Mammary epithelial cell (primary cell): ENCODE measurements at regions of chrX and their contacts with region 1.

Region 1: DNA sequence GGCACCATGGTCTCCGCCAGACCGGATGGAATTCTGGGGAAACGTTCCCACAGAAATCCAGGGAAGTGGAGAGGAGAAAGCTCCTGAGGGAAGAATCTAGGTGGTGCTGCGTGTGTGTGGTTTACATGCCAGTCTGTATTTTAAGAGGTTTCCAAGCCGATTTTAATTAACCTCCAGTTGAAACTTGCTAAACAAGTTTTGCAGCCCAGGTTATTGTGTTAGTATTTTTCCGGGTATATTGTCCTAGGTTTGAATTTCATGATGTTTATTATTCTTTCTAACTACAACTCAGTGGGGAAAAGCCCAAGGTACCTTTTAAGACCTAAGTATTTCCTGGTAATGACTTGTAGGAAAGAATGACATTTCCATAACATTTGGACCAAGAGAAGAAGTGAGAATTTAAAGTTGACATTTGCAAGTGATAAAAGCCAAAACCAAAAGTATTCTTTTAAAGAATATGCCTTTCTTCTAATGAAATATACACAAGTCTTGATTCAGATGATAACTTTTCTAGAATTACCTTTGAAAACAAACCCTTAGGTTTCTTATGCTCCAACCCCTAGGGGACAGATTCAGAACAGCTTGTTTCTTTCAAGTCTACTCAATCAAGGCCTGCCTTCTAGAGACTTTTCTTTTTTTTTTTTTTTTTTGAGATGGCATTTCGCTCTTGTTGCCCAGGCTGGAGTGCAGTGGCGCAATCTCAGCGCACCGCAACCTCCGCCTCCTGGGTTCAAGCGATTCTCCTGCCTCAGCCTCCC is 14.6 kb downstream of the SAT1 start:
- DNase-seq: peak; percentile 81
- H3K4me3 ChIP-seq: no peak overlapping the region
- H3K27ac ChIP-seq: peak overlapping the region; percentile 42
- H3K4me1 ChIP-seq: peaks cover 26% of the 10 kb centered on the region
- H3K27me3 ChIP-seq: no peaks in the 10 kb centered on the region
- CTCF ChIP-seq: peak in 1 of 2 donors; percentile 21

Region 2: DNA sequence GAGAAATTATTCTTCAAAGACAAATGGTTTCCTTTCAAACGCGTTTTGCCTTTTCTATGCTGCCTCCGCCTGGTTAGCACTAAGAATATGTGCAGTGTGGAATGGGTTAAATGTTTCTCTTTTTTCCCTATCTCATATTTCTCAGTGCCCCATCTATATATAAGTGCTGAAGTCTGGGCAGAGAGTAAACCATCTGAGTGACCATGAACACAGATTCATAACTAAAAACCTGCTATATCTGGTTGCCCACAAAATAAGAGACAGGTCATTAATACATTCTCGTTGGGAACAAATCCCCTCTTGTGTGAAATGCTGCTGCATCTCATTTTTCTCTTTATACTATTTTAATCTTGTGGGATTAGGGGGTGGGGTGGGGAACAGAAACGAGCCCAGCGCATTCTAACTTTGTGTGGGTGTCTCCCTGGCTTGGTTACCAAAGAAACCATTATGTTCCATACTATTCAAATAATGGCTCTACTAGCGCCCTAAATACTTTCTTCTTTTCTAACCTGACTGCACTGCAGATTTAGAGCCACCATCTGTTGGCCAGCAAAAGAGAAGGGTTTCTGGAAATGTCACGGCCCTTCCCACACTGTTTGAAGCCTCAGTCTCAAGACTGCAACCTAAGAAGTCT is 505.1 kb before region 1 on chrX:
- CTCF ChIA-PET with region 1: no interaction called
- dilution Hi-C with region 1: no loop called
- in situ Hi-C with region 1: no loop called
- intact Hi-C with region 1: no loop called
- DNase-seq: no peak
- H3K4me3 ChIP-seq: no peak overlapping the region
- H3K27ac ChIP-seq: no peak overlapping the region
- H3K4me1 ChIP-seq: no peaks in the 10 kb centered on the region
- H3K27me3 ChIP-seq: peaks cover 2% of the 10 kb centered on the region
- CTCF ChIP-seq: no peak

Region 3: DNA sequence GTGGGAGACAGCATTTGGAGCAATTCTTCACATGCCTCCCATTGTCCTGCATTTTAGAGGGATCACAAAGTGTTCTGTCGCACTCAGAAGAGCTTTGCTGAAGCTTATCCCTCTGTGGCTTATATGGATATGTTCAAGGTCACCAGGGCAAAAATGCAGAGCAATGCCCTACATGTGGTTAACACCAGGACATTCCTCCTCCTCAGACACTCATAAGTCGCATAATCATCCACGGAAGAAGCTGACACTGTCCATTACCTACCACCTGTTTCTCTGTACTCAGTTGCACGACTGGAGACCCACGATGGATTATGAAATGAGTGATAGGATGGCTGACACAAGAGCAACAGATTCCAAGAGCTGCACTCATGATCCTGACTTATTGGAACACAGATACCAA is 199.0 kb before region 1 on chrX:
- CTCF ChIA-PET with region 1: no interaction called
- dilution Hi-C with region 1: no loop called
- in situ Hi-C with region 1: no loop called
- intact Hi-C with region 1: no loop called
- DNase-seq: no peak
- H3K4me3 ChIP-seq: no peak overlapping the region
- H3K27ac ChIP-seq: no peak overlapping the region
- H3K4me1 ChIP-seq: no peaks in the 10 kb centered on the region
- H3K27me3 ChIP-seq: no peaks in the 10 kb centered on the region
- CTCF ChIP-seq: no peak

Region 4: DNA sequence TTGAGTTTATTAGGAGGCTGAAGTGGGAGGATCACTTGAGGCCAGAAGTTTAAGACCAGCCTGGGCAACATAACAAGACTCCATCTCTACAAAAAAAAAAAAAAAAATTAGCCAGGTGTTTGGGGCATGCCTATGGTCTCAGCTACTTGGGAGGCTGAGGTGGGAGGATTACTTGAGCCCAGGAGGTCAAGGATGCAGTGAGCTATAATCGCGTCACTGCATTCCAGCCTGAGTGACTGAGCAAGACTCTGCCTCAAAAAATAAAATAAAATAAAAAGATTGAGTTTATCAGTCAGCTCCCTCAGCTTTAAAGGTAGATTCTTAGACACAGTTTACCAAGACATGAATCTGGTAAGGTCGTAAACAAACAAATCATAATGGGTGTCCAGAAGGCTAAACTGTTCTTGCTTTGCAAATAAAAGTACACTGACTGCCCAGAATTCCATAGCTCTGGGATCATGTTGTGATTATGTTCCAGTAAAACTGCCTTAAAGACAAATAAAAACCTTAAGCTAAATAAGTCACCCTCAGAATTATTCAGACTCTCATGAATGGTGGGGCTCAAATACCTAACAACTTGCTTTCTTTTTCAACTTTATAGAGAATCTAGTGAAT is 91.4 kb after region 1 on chrX:
- CTCF ChIA-PET with region 1: interaction called, 15 read pairs
- dilution Hi-C with region 1: no loop called
- in situ Hi-C with region 1: no loop called
- intact Hi-C with region 1: no loop called
- DNase-seq: no peak
- H3K4me3 ChIP-seq: no peak overlapping the region
- H3K27ac ChIP-seq: no peak overlapping the region
- H3K4me1 ChIP-seq: peaks cover 10% of the 10 kb centered on the region
- H3K27me3 ChIP-seq: no peaks in the 10 kb centered on the region
- CTCF ChIP-seq: no peak